Right ventricle myocardium inferior (tissue), 1 donor: ENCODE measurements at regions of chr15 and their contacts with region 1.

Region 1: GRCh38 chr15:58227706-58228543 is 89.7 kb downstream of the AQP9 start:
- DNase-seq: peak; percentile 83
- ATAC-seq: peak; percentile 67

Region 2: GRCh38 chr15:58182460-58183163 is 45.3 kb before region 1 on chr15:
- intact Hi-C with region 1: no loop called
- DNase-seq: no peak
- ATAC-seq: peak; percentile 88

Region 3: GRCh38 chr15:58260911-58261267 is 33.0 kb after region 1 on chr15:
- intact Hi-C with region 1: loop called (anchors 5 kb)
- DNase-seq: no peak
- ATAC-seq: peak; percentile 87

Region 4: DNA sequence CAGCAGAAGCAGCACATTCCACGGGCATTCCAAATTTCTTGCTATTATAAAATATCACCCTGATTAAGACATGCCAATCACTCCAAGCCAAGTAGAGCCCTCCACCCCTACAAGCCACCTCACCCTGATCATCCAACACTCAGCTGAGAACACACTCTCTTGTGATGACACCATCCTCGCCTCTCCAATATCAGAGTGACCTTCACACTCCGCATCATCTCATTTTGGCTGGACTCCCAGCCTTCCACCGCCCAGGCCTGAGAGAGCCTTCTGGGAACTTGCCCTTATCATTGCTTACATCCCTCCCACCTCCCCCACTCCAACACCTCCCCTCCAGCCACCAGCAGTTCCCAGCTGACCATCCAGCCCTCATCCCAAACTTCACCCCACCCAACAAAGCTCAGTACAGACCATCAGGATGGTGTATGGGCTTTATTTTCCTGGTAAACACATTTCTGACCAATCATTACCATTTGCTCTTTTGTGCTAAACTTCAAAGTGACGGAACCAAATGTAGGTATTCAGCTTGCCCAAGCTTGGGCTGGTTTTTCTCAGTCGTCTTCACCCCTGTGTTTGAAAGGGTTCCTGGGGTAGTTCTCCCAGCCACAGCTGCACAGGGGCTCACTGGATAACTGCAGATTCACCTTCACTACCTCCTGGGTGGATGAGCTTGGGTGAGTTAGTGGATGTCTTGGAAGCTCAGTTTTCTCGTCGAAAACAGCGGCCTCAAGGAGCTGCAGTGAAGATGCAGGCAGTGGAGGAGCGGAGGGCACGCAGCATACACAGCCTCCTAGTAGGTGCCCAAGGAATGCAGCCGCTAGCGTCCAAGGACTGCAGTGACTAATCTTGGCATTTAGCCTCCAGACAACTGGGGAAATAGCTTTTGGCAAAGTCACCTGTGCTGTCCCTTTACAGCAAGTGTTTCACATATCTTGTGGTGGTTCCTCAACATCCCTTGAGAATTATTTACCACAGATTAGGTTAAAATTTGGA is 319.0 kb after region 1 on chr15:
- intact Hi-C with region 1: loop called (anchors 5 kb)
- DNase-seq: no peak
- ATAC-seq: peak; percentile 90

Region 5: GRCh38 chr15:58758138-58758537 is 530.2 kb after region 1 on chr15:
- intact Hi-C with region 1: loop called (anchors 2 kb)
- DNase-seq: no peak
- ATAC-seq: no peak

Region 6: DNA sequence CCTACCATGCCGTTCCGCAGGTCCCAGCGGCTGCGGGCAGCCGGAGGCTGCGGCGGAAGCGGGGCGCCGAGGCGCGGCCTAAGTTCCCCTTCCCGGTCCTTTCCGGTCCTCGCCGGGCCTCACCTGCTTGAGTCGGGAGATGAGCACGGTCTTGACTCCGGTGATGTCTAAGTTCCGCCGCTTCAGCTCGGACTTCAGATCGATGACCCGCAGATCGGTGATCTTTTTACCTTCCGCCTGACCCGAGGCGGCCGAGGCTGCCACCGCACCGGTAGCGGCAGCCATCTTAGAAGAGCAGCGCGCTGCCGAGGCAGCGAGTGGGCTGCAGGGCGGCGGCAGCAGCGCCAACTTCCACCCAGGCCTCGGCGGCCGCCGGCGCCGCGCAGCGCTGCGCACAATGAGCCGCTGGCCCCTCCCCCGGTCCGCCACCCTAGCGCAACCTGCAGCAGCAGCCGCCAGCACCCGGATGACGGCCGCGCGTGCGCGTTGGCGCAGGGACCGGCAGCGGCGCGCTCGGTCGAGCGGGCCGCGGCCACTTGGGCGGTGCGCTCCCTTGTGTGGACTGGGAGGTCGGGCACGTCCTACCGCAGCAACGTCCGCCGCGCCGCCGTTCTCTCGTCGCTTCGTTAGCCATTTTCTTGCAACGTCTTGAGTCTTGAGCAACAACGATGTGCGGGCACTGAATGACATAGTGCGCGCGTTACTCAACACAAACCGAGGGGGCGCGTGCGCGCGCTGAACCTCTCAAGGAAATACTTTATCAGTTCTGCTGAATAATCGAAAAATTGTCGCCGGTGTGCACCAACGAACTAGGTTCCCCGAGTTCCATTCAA is 705.6 kb after region 1 on chr15 and contains the start of gene SLTM:
- intact Hi-C with region 1: loop called (anchors 5 kb)
- DNase-seq: peak; percentile 98
- ATAC-seq: peak; percentile 98
- total RNA-seq, gene SLTM: 49.2 TPM